ENCODE measurements at regions of chr13 and their contacts with region 1.

Region 1: DNA sequence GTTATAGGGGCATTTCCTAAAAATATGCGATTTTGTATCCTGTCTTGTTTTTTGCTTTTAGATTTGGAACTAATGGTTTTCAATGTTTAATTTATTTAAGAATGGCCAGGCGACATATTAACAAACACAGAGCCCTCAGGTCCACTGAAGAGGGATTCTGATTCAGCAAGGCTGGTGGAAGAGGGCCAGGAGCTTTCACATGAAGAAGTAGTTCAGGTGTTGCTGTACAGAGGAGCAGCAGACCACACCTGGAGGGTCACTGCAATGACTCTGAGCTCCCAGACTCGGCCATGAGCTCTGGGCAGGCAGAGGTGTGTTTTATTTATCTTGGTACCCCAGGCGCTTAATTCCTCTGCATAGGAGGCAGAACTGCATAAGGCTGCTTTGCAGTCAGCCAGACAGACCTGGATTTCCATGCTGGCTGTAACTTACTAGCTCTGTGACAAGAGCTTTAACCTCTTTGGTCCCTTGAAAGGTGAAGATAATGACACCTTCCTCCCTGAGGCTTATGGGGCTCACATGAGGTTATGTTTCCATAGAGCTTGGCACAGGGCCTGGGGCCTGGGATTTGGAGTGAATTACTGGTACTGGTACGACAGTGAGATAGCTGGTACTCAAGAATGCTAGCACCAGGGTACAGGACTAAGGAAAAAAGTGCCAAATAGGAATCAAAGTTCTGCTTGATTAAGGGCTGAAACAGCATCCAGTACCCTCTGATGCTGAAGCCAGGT is 184.7 kb downstream of the OXGR1 start:
- DNase-seq: no peak
- H3K4me3 ChIP-seq: no peak overlapping the region
- H3K27ac ChIP-seq: no peak overlapping the region
- H3K4me1 ChIP-seq: no peaks in the 10 kb centered on the region
- H3K27me3 ChIP-seq: no peaks in the 10 kb centered on the region
- CTCF ChIP-seq: no peak
- POLR2A ChIP-seq: no peak

Region 2: DNA sequence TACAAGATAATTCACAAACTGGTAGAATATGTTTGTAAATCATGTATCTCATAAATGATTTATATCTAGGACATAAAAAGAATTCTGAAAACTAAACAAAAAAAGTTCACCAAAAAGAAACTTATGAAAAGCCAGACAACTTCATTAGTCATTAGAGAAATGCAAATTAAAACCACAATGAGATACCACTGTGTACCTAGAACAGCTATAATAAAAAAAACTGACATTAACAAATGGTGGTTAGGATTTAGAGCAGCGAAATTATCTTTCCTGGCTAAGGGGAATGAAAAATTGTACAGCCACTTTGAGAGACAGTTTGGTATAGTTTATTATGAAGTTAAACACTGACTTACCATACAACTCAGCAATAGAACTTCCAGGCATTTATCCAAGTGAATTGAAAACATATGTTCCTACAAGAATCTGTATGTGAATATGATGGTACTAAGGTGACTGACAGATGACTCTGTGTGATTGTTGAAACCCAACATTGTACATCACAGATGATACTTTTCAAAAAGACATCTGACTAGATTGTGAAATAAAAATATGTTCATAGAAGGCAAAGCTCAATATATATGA is 798.1 kb before region 1 on chr13:
- intact Hi-C with region 1: loop called in 1 of 2 experiments (anchors 10 kb)
- DNase-seq: no peak
- H3K4me3 ChIP-seq: no peak overlapping the region
- H3K27ac ChIP-seq: no peak overlapping the region
- H3K4me1 ChIP-seq: no peaks in the 10 kb centered on the region
- H3K27me3 ChIP-seq: no peaks in the 10 kb centered on the region
- CTCF ChIP-seq: no peak
- POLR2A ChIP-seq: no peak

Region 3: DNA sequence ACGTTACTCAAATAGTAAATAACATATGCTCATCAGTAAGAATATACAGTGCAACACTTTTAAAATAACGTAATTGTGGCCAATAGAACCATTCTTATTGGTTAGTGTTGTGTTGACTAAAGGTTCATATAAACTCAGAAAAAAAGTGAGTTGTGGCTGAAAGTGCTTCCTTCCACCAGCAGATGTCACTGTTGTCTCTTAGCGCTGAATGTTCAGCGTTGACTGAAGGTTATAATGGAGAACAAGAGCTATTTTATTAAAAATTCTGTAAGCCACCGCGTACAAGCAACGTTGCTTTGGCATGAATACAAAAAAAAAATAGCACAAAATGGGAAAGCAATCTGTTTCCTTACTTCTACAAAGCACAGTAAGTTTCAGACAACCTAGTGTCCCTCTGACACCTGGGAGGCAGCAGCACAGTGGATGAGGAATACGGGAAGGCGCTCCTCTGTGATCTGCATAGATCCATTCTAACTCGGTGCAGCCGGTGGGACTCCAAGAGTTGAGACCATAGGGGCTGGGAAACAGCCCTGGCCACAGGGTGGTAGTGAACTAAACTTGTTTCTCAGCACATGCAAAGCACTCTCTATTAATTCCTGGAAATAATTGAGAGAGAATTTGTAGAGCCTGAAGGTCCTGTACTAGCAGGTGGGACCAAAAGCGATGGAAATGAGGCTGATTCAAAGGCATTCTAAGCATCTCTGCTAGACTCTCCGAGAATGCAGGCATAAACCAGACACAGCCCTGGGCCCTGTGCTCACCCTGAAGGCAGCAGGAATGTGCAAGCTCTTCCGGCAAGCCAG is 208.7 kb after region 1 on chr13:
- intact Hi-C with region 1: no loop called
- DNase-seq: peak; percentile 30 to 78 (median 40)
- H3K4me3 ChIP-seq: no peak overlapping the region
- H3K27ac ChIP-seq: no peak overlapping the region
- H3K4me1 ChIP-seq: no peaks in the 10 kb centered on the region
- H3K27me3 ChIP-seq: no peaks in the 10 kb centered on the region
- CTCF ChIP-seq: peak; percentile 73 to 93 (median 80)
- POLR2A ChIP-seq: no peak

Measured in adrenal gland (tissue), 19 donors.